Activated T-helper 1 cell treated with anti-CD3 and anti-CD28 coated beads, Interleukin-12 subunit alpha, Interleukin-12 subunit beta, Interleukin-2, Interleukin-4 antibody, amounts not matched to agents 30 ng/mL and 10 ng/mL and 1 ng/mL, durations not matched to agents 14 hours and 24 hours and 36 hours (primary cell): ENCODE measurements at regions of chr10 and their contacts with region 1.

Region 1: GRCh38 chr10:3785257-3785850 is 345 bp upstream of the KLF6 start:
- DNase-seq: peak; percentile 99
- H3K4me3 Mint-ChIP-seq: peak overlapping the region; percentile 93
- H3K27ac Mint-ChIP-seq: peak overlapping the region; percentile 96
- H3K4me1 Mint-ChIP-seq: peaks cover 49% of the 10 kb centered on the region
- H3K27me3 Mint-ChIP-seq: no peaks in the 10 kb centered on the region

Region 2: GRCh38 chr10:3172446-3173170 is 612.7 kb before region 1 on chr10 and contains the start of gene PITRM1:
- intact Hi-C with region 1: loop called (anchors 2 kb)
- DNase-seq: peak; percentile 99
- H3K4me3 Mint-ChIP-seq: peak within 1 kb of the TSS; percentile 90
- H3K27ac Mint-ChIP-seq: peak within 1 kb of the TSS; percentile 88
- H3K4me1 Mint-ChIP-seq: peaks cover 9% of the 10 kb centered on the region
- H3K27me3 Mint-ChIP-seq: peaks cover 20% of the 10 kb centered on the region
- total RNA-seq, gene PITRM1: 76.3 and 80.4 TPM in 2 replicates

Region 3: DNA sequence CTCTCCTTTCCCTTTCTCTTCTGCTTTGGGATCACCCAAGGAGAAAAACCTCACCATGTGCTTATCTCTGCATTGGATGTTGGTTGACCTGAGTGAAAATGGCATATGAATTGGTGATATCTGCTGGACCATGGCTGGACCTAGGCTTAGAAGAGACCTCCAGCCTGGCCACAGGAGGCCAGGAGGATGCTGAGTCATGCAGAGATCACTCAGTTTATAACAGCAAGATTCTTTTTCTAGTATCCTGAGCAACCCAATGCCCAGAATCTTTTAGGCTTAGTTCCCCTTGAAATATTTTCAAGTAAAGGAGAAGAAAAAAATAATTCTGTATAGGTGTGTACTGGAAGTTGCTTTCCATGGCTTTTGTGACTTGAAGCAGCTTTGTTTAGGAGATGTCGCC is 236.7 kb before region 1 on chr10:
- intact Hi-C with region 1: no loop called
- DNase-seq: no peak
- H3K4me3 Mint-ChIP-seq: no peak overlapping the region
- H3K27ac Mint-ChIP-seq: no peak overlapping the region
- H3K4me1 Mint-ChIP-seq: no peaks in the 10 kb centered on the region
- H3K27me3 Mint-ChIP-seq: peaks cover 8% of the 10 kb centered on the region

Region 4: DNA sequence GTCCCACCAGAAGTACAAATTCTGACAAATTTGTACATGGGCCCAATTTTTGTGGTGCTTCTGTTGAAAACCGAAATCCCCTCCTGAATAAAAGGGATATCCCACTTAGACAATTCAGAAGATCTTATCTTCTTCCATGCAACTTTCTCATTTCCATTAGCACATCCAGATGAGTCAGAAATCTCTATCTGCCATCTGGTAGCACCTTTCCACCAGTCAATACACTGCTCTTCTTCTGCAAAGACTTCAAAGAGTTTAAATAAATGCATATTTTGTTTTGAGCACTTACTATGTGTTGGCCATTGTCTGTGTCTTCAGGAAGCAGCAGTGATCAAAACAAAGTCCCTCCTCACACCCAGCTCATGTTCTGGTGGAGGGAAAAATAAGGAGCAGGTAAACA is 12.4 kb after region 1 on chr10:
- intact Hi-C with region 1: loop called (anchors 1 kb)
- DNase-seq: no peak
- H3K4me3 Mint-ChIP-seq: peak overlapping the region; percentile 61
- H3K27ac Mint-ChIP-seq: peak overlapping the region; percentile 88
- H3K4me1 Mint-ChIP-seq: peaks cover 43% of the 10 kb centered on the region
- H3K27me3 Mint-ChIP-seq: no peaks in the 10 kb centered on the region

Region 5: DNA sequence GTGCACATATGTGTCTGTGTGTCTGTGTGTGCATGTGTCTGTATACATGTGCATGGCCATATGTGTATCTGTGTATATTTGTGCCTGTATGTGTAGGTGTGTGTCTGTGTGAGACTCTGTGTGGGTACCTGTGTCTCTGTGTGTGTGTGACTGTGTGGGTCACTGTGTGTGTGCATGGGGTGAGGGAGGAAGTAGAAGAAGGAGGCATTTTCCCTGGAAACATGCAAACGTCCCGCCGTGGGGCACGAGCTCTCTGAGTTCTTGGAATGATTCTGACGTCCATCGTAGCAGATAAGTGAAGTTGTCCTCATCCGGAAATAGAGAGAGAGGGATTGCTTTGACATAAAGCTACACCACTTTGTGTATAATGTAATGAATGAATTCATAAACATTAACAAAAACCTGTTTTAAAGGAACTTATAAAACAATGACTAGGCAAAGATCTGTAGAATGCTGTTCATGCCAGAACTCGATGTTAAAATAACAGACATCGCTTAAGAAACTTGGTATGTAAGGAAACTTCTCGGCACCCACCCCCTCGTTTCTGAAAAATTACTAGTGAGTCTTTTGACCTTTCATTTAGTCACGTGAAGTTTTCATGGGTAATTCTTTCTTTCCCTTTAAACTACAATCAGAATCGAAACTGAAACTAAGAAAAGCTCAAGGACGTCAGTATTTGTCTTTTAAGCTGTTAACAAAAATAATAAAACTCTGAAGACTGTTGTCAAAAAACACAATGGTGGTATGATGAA is 43.2 kb after region 1 on chr10:
- intact Hi-C with region 1: loop called (anchors 2 kb)
- DNase-seq: no peak
- H3K4me3 Mint-ChIP-seq: peak overlapping the region; percentile 58
- H3K27ac Mint-ChIP-seq: peak overlapping the region; percentile 93
- H3K4me1 Mint-ChIP-seq: peaks cover 57% of the 10 kb centered on the region
- H3K27me3 Mint-ChIP-seq: no peaks in the 10 kb centered on the region

Region 6: DNA sequence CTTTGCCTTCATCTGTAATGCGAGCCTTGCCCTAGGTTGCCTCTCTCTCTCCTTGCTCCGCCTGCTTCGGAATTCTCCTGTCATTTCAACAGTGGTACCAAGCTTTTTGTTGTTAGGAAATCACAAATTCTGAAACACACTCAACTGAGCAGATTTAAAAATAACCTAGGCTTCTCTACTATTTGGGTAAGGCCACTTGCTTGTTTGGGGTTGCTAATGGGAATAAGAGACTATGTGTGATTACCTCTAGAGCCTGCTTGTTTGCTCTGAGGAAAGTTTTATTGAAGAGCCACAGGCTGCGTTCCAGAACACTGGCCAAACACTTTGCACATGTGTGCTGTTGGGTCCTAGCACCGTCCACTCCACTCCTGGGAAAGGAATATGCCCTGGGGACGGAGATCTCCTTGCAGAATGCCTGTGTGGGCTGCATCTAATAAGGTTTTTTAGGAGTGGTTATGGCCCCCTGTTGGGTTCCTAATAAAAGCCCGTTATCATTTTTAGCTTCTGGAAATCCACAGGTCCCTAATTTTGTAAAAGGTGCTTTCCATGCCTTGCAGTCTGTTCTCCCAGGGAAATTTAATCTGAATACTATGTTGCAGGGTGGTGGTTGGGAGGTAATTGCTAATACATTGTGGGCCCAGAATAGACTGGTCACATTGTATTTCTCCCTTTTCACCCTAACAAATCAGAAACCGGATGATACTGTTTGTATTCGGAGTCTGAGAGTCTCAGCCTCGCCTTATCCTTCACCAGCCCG is 68.4 kb after region 1 on chr10:
- intact Hi-C with region 1: no loop called
- DNase-seq: no peak
- H3K4me3 Mint-ChIP-seq: no peak overlapping the region
- H3K27ac Mint-ChIP-seq: peak overlapping the region; percentile 57
- H3K4me1 Mint-ChIP-seq: peaks cover 37% of the 10 kb centered on the region
- H3K27me3 Mint-ChIP-seq: no peaks in the 10 kb centered on the region

Region 7: DNA sequence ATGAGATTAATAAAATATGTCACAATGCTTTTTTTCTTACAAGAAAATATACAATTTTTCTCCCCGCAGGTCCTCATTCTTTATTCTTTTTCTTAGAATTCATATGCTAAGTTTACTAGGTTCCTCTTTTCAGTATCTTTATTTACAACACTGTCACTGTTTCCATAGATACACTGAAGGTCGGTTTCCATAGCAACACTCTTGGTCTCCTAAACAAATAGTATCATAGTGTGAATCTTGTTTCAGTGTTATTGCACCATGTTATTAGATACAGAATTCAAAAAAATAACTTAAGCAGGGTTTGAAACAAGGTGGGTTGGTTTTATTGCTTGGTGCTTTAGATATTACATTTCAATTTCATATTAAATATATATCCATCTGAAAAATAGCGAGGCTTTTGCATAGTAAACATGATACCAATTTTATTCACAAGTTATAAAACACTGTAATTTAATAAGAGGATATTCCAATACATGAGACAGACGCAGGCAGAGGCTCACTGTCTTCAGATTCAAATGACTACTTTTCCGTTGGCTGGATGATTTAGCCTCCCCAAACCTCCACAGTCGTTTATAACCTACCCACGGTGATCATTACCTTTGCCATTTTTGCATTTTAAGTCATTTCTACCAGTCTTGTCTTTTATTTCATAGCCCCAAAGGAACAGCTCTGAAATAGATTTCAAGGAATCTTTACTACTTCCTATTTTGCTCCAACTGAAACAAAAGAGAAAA is 88.5 kb after region 1 on chr10:
- intact Hi-C with region 1: loop called (anchors 1 kb)
- DNase-seq: no peak
- H3K4me3 Mint-ChIP-seq: peak overlapping the region; percentile 62
- H3K27ac Mint-ChIP-seq: peak overlapping the region; percentile 97
- H3K4me1 Mint-ChIP-seq: peaks cover 69% of the 10 kb centered on the region
- H3K27me3 Mint-ChIP-seq: no peaks in the 10 kb centered on the region

Region 8: GRCh38 chr10:4151466-4151865 is 366.1 kb after region 1 on chr10:
- intact Hi-C with region 1: no loop called
- DNase-seq: no peak
- H3K4me3 Mint-ChIP-seq: no peak overlapping the region
- H3K27ac Mint-ChIP-seq: no peak overlapping the region
- H3K4me1 Mint-ChIP-seq: peaks cover 12% of the 10 kb centered on the region
- H3K27me3 Mint-ChIP-seq: no peaks in the 10 kb centered on the region